ENCODE measurements at regions of chr22 and their contacts with region 1.

Region 1: GRCh38 chr22:26418620-26419019 is 10.4 kb upstream of the ASPHD2 start:
- DNase-seq: no peak
- ATAC-seq: no peak
- H3K4me3 Mint-ChIP-seq: no peak overlapping the region
- H3K27ac Mint-ChIP-seq: no peak overlapping the region
- H3K4me1 Mint-ChIP-seq: no peaks in the 10 kb centered on the region
- H3K27me3 Mint-ChIP-seq: peaks cover 2% of the 10 kb centered on the region
- CTCF ChIP-seq: no peak

Region 2: GRCh38 chr22:26428515-26429457 is 10.2 kb after region 1 on chr22 and contains the start of gene ASPHD2:
- CTCF ChIA-PET with region 1: interaction called, 15 read pairs
- POLR2A ChIA-PET with region 1: interaction called, 3 read pairs
- intact Hi-C with region 1: no loop called
- DNase-seq: peak; percentile 85
- ATAC-seq: peak; percentile 88
- H3K4me3 Mint-ChIP-seq: peak within 1 kb of the TSS; percentile 100
- H3K27ac Mint-ChIP-seq: peak within 1 kb of the TSS; percentile 100
- H3K4me1 Mint-ChIP-seq: peaks cover 51% of the 10 kb centered on the region
- H3K27me3 Mint-ChIP-seq: peaks cover 5% of the 10 kb centered on the region
- CTCF ChIP-seq: no peak
- total RNA-seq, gene ASPHD2: 12.0 to 14.0 TPM

Region 3: DNA sequence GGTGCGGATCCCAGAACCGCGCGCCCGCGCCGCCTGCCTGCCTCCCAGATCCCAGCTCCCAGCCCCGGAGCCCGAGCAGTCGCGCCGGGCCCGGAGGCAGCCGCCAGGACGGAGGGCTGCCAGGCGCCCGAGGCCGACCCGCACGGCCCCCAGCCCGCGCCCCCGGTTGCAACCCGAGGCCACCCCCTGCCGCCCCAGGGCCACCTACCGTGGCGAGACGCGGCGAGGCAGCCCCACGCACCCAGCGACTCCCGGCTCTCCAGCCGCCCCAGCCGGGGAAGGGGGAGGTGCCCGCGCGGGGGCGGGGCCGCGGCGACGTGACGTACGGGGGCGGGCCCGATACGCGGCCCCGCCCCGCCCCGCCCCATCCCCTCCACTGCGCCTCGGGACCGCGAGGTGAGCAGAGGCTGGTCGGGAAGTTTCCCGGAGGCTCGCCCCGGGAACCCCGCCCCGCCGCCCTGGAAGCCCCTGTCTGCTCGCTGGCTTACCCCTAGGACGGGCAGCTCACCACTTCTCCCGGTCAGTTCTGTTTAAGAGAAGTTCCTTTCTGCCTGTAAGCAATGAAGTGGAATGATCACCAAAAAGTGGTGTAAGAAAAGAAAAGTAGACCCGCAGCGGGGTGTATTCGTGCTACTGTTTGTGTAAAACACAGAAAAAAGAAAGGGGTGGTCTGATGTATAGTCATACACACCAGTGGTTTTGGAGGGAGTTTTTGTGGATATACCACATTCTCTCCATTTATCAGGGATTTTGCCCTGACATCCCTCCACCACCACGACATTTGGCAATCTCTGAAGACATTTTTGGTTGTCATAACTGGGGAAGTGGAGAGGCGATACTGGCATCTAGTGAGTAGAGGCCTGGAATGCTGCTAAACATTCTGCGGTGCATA is 171.5 kb after region 1 on chr22 and contains the start of gene TPST2:
- CTCF ChIA-PET with region 1: no interaction called
- POLR2A ChIA-PET with region 1: no interaction called
- intact Hi-C with region 1: no loop called
- DNase-seq: peak; percentile 72
- ATAC-seq: peak; percentile 76
- H3K4me3 Mint-ChIP-seq: peak within 1 kb of the TSS; percentile 89
- H3K27ac Mint-ChIP-seq: peak within 1 kb of the TSS; percentile 89
- H3K4me1 Mint-ChIP-seq: peaks cover 73% of the 10 kb centered on the region
- H3K27me3 Mint-ChIP-seq: no peaks in the 10 kb centered on the region
- CTCF ChIP-seq: no peak
- total RNA-seq, gene TPST2: 30.7 to 33.6 TPM

Measured in activated CD8-positive, alpha-beta T cell treated with anti-CD3 and anti-CD28 coated beads for 36 hours (primary cell).